Activated naive CD4-positive, alpha-beta T cell treated with anti-CD3 and anti-CD28 coated beads, Interleukin-2, amount 10 ng/mL, durations not matched to agents 7 days and 5 days (primary cell): ENCODE measurements at regions of chr15 and their contacts with region 1.

Region 1: DNA sequence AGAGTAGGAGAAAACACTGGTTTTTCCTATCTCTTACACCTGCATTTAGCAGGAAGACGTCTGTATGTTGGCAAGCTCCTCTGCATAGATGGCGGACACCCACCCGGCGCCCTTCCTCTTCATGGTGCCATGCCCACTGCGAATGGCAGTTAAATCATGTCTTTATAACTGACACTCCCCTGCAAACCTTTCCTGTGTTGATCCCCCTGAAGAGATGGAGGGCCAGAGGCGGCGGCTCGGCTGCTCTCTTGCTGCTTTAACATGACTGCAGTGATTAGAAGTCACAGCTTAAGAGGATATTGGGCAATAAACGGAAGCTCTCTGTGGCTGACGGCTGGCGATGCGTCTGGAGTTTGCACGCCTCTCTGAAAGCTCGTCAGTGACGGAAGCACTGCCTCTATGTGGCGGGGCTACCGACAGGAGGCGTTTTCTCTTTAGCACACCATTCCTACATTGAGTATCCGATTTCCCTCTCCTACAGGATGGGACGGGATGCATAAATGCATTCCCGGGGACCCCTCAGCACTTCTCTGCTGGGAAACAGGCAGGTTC is 25.5 kb upstream of the SNRPA1 start:
- DNase-seq: peak; percentile 83
- H3K4me3 Mint-ChIP-seq: peak overlapping the region; percentile 58
- H3K27ac Mint-ChIP-seq: peak overlapping the region; percentile 89
- H3K4me1 Mint-ChIP-seq: peaks cover 20% of the 10 kb centered on the region
- H3K27me3 Mint-ChIP-seq: peaks cover 9% of the 10 kb centered on the region

Region 2: GRCh38 chr15:101045236-101045646 is 275.3 kb before region 1 on chr15:
- CTCF ChIA-PET with region 1: no interaction called
- DNase-seq: peak; percentile 5
- H3K4me3 Mint-ChIP-seq: no peak overlapping the region
- H3K27ac Mint-ChIP-seq: no peak overlapping the region
- H3K4me1 Mint-ChIP-seq: no peaks in the 10 kb centered on the region
- H3K27me3 Mint-ChIP-seq: peaks cover 25% of the 10 kb centered on the region

Region 3: DNA sequence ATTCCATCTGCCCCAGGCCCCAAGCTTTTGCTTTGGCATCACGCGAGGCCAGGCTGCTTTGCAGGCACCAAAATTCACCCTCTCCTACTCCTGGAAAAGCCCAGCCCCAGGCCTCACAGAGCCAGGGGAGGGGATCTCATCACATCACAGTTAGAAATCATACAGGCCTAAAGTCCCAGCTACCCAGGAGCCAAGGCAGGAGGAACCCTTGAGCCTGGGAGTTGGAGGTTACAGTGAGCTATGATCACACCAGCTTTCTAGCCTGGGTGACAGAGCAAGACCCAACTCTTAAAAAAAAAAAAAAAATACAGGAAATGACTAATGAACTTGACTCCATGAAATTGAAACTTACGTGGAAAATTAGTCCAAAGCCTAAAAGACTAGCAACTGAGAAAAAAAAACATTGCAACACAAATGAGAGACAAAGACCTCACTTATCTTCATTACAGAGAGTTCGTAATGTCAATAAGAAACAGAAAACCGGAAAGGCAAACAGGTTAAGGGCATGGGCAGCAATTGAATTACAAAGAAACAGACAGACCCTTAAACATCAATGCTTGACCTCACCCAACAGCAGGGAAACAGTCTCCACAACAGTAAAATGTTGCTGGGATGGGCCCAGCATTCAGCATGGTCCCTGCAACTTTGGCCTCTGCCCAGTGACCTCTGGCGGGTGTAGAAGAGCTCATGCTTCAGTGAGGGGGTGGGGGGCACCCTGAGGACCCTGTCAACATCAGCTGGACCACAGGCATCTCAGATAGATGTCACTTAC is 249.9 kb before region 1 on chr15:
- CTCF ChIA-PET with region 1: no interaction called
- DNase-seq: no peak
- H3K4me3 Mint-ChIP-seq: no peak overlapping the region
- H3K27ac Mint-ChIP-seq: peak overlapping the region; percentile 74
- H3K4me1 Mint-ChIP-seq: peaks cover 13% of the 10 kb centered on the region
- H3K27me3 Mint-ChIP-seq: peaks cover 15% of the 10 kb centered on the region

Region 4: DNA sequence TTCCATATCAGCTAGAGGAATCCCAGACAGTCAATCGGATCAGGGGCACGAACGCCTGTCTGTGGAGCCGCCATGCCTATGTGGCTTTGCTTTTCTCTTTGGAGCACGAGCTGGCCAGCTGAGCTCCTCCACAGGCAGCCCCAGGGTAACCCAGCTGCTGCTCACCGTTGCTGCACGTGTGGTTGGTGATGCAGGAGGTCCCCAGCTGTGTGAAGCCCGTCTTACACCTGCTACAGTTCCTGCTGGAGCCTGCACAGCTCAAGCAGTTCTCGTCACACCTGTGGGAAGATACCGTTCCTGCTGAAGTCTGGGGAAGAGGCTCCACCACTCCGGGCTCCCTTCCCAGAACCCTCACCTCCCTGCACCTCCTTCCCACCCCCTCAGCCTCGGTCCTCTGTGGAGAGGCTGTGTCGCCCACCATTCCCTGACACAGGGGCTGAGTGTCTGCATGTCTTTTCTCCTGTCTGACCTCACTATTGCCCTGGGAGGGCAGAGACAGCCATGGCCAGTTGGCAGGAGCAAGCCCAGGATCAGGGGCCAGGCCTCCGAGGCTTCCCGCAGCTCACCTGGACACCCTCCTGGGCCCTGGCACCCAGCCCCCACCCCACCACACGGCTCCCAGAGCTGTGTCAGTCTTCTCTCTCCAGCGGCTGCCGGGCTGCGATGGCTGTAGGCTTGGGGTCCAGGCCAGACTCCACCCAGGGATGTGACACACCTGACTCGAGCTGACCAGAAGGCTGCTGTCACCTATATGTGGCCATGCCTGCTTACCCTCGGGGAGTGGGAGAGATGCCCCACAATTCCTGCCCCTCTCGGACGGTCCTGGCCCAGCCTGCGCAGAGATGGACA is 13.3 kb before region 1 on chr15:
- CTCF ChIA-PET with region 1: interaction called, 16 read pairs
- DNase-seq: no peak
- H3K4me3 Mint-ChIP-seq: no peak overlapping the region
- H3K27ac Mint-ChIP-seq: no peak overlapping the region
- H3K4me1 Mint-ChIP-seq: no peaks in the 10 kb centered on the region
- H3K27me3 Mint-ChIP-seq: peaks cover 9% of the 10 kb centered on the region

Region 5: DNA sequence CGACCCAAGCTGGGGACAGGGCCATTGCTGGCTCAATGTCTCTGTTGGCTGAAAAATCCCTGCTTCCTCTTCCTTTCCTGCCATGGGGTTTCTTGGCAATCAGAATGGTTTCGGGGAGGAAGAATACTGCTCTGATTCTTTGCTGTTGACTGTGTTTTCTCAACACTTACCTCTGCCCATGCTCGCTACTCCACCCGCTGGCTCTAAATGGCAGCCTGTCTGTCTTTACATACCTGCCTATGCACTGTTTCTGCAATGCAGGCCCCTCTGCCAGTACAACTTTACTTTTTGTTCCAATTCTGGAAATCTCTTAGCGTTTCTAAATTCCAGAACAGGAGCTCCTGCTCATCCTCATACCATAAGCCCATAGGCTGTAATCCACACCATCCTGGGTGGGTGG is 12.8 kb after region 1 on chr15:
- CTCF ChIA-PET with region 1: interaction called, 15 read pairs
- DNase-seq: no peak
- H3K4me3 Mint-ChIP-seq: no peak overlapping the region
- H3K27ac Mint-ChIP-seq: peak overlapping the region; percentile 98
- H3K4me1 Mint-ChIP-seq: peaks cover 17% of the 10 kb centered on the region
- H3K27me3 Mint-ChIP-seq: peaks cover 17% of the 10 kb centered on the region